ENCODE measurements at regions of chr5 and their contacts with region 1.

Region 1: DNA sequence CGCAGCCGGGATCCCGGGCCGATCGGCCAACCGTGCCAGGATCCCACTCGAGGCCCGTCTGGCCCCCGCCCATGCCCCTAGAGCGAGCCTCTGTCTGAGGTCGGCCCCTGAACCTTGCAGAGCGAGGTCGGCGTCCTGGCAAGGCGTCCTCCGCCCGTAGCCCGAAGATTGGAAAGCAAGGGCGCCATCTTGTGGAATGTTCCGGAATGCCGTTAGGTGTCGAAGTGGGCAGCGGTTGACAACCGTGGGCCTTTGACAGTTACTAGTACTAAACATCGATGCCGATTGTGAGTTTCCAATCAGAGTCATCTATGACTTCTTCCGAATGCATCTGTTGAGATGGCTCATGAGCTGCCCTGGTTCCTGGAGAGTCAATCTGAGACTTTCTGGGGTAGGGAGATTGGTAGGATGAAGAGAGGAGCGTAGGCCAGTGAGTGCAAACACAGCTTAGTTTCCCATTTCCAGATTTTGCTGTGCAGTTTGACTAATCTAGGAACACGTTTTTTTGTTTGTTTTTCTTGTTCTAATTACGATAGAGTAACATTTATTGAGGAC is 923 bp upstream of the PLK2 start:
- DNase-seq: peak; percentile 80
- H3K4me3 ChIP-seq: peak overlapping the region; percentile 91
- H3K27ac ChIP-seq: peak overlapping the region; percentile 92
- H3K27me3 ChIP-seq: no peaks in the 10 kb centered on the region
- CTCF ChIP-seq: peak; percentile 89

Region 2: GRCh38 chr5:57302164-57302563 is 1158.6 kb before region 1 on chr5:
- in situ Hi-C with region 1: loop called (anchors 25 kb)
- DNase-seq: peak; percentile 79
- H3K4me3 ChIP-seq: no peak overlapping the region
- H3K27ac ChIP-seq: peak overlapping the region; percentile 44
- H3K27me3 ChIP-seq: no peaks in the 10 kb centered on the region
- CTCF ChIP-seq: peak; percentile 44

Region 3: GRCh38 chr5:57779383-57780223 is 681.2 kb before region 1 on chr5:
- in situ Hi-C with region 1: loop called (anchors 25 kb)
- DNase-seq: peak; percentile 81
- H3K4me3 ChIP-seq: no peak overlapping the region
- H3K27ac ChIP-seq: peak overlapping the region; percentile 73
- H3K27me3 ChIP-seq: no peaks in the 10 kb centered on the region
- CTCF ChIP-seq: peak; percentile 68

Region 4: DNA sequence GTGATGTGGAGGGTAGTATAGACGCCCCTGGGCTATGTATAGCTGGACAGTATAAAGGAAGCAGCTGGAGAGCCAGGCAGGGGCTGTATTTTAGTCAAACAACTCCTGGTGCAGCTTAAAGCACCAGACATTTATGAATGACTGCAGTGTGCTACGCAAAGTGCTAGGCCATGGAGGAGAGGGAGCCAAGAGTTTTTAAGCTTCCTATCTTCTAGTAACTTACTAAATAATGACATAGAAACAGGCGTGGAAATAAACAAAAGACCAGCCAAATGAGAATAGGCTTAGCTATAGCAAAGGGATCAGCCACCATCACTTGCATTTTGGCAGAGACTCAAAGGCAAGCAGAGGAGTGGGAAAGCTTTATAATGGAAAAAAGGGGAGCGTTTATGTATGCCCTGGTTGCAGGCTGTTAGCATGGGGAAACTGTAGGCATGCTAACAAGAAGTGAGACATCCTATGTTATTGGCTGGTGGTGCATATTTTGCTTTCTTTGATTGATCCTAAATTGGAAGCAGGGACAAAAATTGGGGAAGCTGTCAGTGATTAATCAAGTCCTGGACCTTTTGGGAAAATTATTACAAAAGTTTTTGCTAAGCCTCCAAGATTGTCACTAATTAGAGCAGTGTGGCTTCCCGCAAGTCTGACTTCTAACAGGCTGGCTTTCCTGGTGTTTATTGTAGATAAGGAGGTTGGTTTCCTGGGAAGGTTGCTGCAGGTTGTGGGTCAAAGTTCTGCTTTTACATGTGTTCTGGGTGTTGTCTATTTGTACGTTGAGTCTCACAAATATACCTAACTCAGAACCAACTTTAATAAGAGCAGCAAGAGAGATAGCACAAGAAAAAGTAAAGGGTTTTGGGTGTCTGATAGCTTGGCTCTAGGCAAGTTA is 168.7 kb after region 1 on chr5:
- in situ Hi-C with region 1: no loop called
- DNase-seq: no peak
- H3K4me3 ChIP-seq: no peak overlapping the region
- H3K27ac ChIP-seq: no peak overlapping the region
- H3K27me3 ChIP-seq: no peaks in the 10 kb centered on the region
- CTCF ChIP-seq: no peak